ENCODE measurements at regions of chr4 and their contacts with region 1.

Region 1: DNA sequence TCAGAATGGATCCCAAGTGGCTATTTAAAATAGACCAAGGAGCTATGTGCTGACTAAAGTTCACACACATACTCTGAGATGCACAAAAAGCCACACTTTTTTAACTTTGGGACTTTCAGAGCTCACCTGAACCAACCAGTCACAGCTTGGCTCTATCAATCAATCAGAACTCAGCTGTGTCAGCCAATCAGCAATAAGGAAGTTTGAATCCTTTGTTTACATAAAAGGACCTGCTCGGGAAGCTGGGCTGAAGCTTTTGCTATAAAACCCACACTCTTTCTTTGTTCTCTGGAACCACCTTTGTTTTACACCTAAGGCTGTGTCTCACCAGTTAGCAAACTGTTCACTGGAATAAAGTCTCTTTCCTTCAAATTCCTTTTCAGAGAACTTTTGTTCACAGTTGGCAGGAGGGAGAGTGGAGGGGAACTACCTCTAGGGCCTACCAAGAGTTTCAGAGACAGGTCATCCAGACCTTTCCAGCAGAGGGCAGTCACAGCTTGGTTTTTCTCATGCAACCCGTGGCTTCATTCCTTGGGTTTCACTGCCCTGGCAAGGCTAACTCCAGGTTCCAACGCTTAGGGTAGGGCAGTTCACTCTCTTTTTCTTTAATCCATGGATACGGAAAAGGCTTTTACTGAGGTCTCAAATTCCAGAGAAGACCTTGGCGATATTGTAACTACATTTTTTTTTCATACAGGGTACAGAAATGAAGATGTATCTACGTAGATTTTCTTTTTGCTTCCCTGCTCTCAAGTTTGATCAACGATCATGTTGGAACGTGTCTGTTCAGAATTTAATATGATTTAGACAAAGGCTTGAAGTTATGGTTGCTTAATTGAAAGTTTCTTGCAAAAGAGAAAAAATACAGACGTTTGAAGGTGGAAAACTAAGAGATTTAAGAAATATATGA is 80.7 kb downstream of the GPRIN3 start:
- DNase-seq: peak; percentile 62
- H3K4me3 Mint-ChIP-seq: peak overlapping the region; percentile 28
- H3K27ac Mint-ChIP-seq: no peak overlapping the region
- H3K4me1 Mint-ChIP-seq: peaks cover 11% of the 10 kb centered on the region
- H3K27me3 Mint-ChIP-seq: no peaks in the 10 kb centered on the region

Region 2: DNA sequence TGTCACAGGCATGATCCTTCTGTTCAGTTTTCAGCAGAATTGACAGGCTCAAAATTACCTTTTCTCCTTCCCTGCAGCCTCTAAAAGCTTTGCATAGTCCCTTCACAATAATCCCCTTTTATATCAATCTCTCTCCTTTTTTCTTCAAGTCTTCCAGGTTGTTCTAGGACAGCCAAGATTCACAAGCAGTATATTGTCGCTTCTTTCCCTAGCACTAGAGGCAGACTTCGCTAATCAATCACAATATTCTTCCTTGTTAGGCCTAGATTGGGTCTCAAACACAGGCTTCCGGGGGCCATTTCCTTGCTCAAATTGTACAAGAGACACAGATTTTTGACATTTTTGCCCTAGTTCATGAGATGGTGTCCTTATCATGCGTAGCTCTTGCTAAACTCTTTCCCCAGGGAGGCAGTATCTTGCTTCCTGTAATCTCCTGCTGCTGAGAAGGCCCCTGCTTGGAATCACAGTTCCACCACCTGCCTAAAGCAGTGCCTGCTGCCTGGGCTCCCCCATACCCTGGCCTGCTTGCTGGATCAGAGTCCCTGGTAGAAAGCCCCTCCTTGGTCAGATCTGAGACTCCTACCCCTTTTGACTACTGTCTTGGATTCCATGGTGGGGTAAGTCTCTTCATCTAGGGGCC is 1519.5 kb before region 1 on chr4:
- intact Hi-C with region 1: no loop called
- DNase-seq: no peak
- H3K4me3 Mint-ChIP-seq: no peak overlapping the region
- H3K27ac Mint-ChIP-seq: no peak overlapping the region
- H3K4me1 Mint-ChIP-seq: no peaks in the 10 kb centered on the region
- H3K27me3 Mint-ChIP-seq: no peaks in the 10 kb centered on the region

Region 3: GRCh38 chr4:89123451-89123851 is 103.5 kb before region 1 on chr4:
- intact Hi-C with region 1: no loop called
- DNase-seq: no peak
- H3K4me3 Mint-ChIP-seq: no peak overlapping the region
- H3K27ac Mint-ChIP-seq: no peak overlapping the region
- H3K4me1 Mint-ChIP-seq: peaks cover 8% of the 10 kb centered on the region
- H3K27me3 Mint-ChIP-seq: peaks cover 2% of the 10 kb centered on the region

Region 4: GRCh38 chr4:89158884-89159503 is 67.9 kb before region 1 on chr4:
- intact Hi-C with region 1: loop called (anchors 2 kb)
- DNase-seq: no peak
- H3K4me3 Mint-ChIP-seq: no peak overlapping the region
- H3K27ac Mint-ChIP-seq: no peak overlapping the region
- H3K4me1 Mint-ChIP-seq: no peaks in the 10 kb centered on the region
- H3K27me3 Mint-ChIP-seq: peaks cover 13% of the 10 kb centered on the region

Region 5: GRCh38 chr4:89242864-89243732 is 16.2 kb after region 1 on chr4:
- intact Hi-C with region 1: loop called (anchors 1 kb)
- DNase-seq: peak; percentile 27
- H3K4me3 Mint-ChIP-seq: peak overlapping the region; percentile 24
- H3K27ac Mint-ChIP-seq: peak overlapping the region; percentile 82
- H3K4me1 Mint-ChIP-seq: peaks cover 58% of the 10 kb centered on the region
- H3K27me3 Mint-ChIP-seq: no peaks in the 10 kb centered on the region

Region 6: GRCh38 chr4:89254847-89255246 is 27.9 kb after region 1 on chr4:
- intact Hi-C with region 1: loop called (anchors 2 kb)
- DNase-seq: peak; percentile 13
- H3K4me3 Mint-ChIP-seq: no peak overlapping the region
- H3K27ac Mint-ChIP-seq: peak overlapping the region; percentile 68
- H3K4me1 Mint-ChIP-seq: peaks cover 76% of the 10 kb centered on the region
- H3K27me3 Mint-ChIP-seq: no peaks in the 10 kb centered on the region

Region 7: DNA sequence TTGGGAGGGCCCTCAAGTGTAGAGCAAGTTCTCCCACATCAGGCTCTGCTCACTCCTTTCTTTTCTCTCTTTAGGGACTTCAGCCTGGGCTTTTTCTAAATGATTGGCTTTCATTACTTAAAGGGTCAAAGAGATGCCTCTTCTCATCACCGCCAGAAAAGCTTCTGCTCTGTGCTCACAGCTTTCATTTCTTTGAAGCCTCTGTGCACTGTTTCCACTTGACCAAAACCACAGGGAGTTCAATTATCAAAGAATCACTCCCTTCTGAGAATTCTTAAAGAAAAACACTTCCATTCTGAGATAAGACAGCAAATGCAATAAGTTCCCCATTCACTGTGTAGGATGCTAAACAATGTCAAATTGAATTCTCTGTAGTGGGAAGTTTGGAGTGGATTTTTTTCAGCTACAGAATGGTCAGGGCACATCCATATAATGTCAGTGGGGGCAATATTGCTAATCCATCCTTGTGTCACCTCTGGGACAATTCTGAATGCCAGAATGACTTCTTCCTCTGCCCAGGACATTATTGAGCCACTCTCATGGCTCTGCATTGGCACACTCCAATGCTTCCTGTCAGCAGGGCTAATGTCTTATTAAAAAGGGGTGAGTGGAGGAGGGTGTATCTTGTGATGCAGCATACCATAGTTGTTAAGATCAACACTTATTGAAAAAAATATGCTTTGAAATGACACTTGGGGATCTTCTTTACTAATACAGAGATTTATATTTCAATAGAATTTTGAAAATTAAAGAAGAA is 392.5 kb after region 1 on chr4:
- intact Hi-C with region 1: loop called (anchors 10 kb)
- DNase-seq: peak; percentile 9
- H3K4me3 Mint-ChIP-seq: peak overlapping the region; percentile 59
- H3K27ac Mint-ChIP-seq: peak overlapping the region; percentile 81
- H3K4me1 Mint-ChIP-seq: peaks cover 22% of the 10 kb centered on the region
- H3K27me3 Mint-ChIP-seq: no peaks in the 10 kb centered on the region